ENCODE measurements at regions of chr12 and their contacts with region 1.

Region 1: GRCh38 chr12:131991816-131992430 is 42.2 kb downstream of the EP400 start:
- DNase-seq: no peak
- ATAC-seq: no peak
- H3K4me3 ChIP-seq: no peak overlapping the region
- H3K27ac ChIP-seq: no peak overlapping the region
- H3K4me1 ChIP-seq: no peaks in the 10 kb centered on the region
- H3K27me3 ChIP-seq: no peaks in the 10 kb centered on the region
- CTCF ChIP-seq: no peak

Region 2: DNA sequence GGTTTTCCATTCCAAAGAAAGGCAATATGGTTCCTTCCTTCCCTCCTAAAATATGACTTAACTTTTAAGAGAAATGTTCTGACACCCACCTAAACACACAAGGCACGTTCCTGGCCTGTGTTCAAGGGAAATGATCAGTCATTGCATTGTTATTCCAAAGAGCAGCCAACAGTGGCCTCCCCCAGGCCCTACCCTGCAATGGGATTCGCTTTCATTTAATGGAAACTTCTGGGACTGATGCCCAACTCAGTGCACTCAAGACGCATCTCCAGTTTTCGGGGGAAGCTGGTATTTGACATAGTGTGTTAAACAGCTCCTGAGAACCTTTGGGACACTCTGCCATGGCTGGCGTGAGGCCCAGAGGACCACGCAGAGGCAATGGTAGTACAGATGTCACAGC is 86.3 kb after region 1 on chr12:
- CTCF ChIA-PET with region 1: interaction called, 13 read pairs
- POLR2A ChIA-PET with region 1: interaction called, 3 read pairs
- intact Hi-C with region 1: no loop called
- DNase-seq: peak; percentile 73
- ATAC-seq: peak; percentile 83
- H3K4me3 ChIP-seq: no peak overlapping the region
- H3K27ac ChIP-seq: no peak overlapping the region
- H3K4me1 ChIP-seq: peaks cover 8% of the 10 kb centered on the region; the same call in 1 of the 2 replicates
- H3K27me3 ChIP-seq: no peaks in the 10 kb centered on the region
- CTCF ChIP-seq: no peak

Measured in PC-3 (cell line).